ENCODE measurements at regions of chr6 and their contacts with region 1.

Region 1: DNA sequence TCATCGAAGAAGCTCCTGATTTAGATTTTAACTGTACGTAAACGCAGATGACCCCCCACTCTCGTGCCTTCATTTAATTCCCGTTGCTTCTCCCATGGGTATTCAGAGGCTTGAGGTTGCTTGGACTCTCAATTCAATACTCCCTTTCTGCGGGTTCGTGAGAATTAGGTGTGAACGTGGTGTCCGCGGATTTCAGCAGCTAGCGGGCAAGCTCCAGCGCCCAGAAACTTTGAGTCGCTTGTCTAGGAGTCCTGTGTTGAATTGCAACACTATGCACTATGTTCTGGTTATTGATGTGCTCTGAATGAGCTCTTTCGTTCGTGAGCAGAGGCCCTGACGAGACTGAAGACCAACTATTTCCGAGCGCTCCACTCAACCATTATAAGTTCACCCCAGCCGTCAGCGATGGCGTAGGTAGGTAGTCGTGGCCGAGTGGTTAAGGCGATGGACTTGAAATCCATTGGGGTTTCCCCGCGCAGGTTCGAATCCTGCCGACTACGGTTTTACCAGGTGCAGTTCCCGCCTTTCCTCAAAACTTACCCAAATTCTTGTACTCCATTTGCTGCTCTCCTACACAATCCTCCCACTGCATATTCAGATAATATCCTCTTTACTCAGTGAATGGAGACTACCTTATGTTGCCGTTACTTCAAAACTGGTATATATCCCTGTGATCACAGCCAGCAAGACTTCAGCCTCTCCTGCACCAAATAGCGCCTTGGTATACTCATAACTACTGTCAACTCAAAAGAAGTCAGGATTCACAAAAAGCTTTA is 72.6 kb upstream of the ZNF184 start:
- DNase-seq: peak; percentile 87
- H3K4me3 Mint-ChIP-seq: peak overlapping the region; percentile 83
- H3K27ac Mint-ChIP-seq: peak overlapping the region; percentile 91
- H3K4me1 Mint-ChIP-seq: peaks cover 22% of the 10 kb centered on the region
- H3K27me3 Mint-ChIP-seq: no peaks in the 10 kb centered on the region
- CTCF ChIP-seq: no peak

Region 2: GRCh38 chr6:27177485-27178406 is 367.7 kb before region 1 on chr6:
- CTCF ChIA-PET with region 1: no interaction called
- POLR2A ChIA-PET with region 1: interaction called, 6 read pairs
- intact Hi-C with region 1: loop called (anchors 5 kb)
- DNase-seq: peak; percentile 92
- H3K4me3 Mint-ChIP-seq: peak overlapping the region; percentile 87
- H3K27ac Mint-ChIP-seq: peak overlapping the region; percentile 92
- H3K4me1 Mint-ChIP-seq: no peaks in the 10 kb centered on the region
- H3K27me3 Mint-ChIP-seq: no peaks in the 10 kb centered on the region
- CTCF ChIP-seq: peak; percentile 36

Region 3: DNA sequence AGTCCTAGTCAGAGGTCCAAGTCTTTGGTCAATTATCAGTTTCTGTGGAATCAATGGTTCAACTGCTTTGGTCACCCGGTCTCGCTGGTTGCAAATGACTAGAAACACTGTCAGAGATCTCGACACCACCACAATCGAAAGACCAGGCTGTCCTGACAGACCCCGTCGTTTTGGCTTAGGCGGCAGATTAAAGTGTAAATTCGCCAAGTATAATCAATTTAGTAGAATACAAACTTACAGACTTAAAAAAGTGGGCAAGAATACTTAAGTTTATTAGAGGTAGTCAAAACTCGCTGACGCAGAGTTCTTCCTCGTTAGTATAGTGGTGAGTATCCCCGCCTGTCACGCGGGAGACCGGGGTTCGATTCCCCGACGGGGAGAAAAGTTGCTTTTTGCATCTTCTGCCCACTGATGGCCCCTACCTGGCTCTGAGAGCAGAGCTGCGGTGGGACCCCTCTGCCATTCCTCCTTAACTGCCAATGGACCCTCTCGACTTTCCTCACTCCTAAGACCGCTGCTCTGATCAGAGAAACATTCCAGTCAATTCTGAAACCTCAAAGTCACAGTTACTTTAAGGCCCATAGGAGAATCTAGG is 41.9 kb before region 1 on chr6:
- CTCF ChIA-PET with region 1: interaction called, 5 read pairs
- POLR2A ChIA-PET with region 1: interaction called, 5 read pairs
- intact Hi-C with region 1: loop called (anchors 5 kb)
- DNase-seq: peak; percentile 74
- H3K4me3 Mint-ChIP-seq: peak overlapping the region; percentile 83
- H3K27ac Mint-ChIP-seq: peak overlapping the region; percentile 84
- H3K4me1 Mint-ChIP-seq: peaks cover 11% of the 10 kb centered on the region
- H3K27me3 Mint-ChIP-seq: no peaks in the 10 kb centered on the region
- CTCF ChIP-seq: no peak

Region 4: DNA sequence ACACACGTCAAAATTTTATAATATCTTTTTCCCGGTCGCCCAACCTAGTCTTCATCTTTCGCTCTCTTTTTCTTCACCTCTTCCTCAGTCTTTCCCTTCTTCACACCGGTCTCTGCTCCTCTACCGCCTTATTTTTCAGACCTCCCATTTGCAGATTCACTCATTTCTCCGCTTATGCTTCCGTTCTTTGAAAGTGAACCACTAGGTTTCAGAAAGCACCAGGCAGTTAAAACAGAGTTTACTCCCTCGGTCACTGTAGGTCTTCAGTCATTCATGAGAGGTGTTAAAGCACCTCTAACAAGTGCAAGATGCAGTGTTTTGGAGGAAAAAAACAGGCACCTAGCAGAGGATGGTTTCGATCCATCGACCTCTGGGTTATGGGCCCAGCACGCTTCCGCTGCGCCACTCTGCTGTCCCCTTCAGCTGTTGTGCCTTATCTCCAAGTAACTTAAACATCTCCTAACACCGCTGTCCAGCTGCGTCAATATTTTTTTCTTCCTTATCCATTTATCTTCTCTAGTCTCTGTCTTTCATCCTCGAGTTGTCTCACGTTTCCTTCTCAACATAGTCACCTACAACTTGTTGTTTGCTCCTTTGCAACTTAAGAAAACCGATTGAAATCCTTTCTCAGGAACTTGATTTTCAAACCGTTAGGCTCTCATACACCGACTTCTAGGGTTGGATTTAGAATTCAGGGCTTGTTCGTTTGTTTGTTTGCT is 47.2 kb after region 1 on chr6:
- CTCF ChIA-PET with region 1: interaction called, 3 read pairs
- POLR2A ChIA-PET with region 1: interaction called, 4 read pairs
- intact Hi-C with region 1: loop called (anchors 1 kb)
- DNase-seq: peak; percentile 82
- H3K4me3 Mint-ChIP-seq: no peak overlapping the region
- H3K27ac Mint-ChIP-seq: no peak overlapping the region
- H3K4me1 Mint-ChIP-seq: no peaks in the 10 kb centered on the region
- H3K27me3 Mint-ChIP-seq: no peaks in the 10 kb centered on the region
- CTCF ChIP-seq: no peak

Region 5: DNA sequence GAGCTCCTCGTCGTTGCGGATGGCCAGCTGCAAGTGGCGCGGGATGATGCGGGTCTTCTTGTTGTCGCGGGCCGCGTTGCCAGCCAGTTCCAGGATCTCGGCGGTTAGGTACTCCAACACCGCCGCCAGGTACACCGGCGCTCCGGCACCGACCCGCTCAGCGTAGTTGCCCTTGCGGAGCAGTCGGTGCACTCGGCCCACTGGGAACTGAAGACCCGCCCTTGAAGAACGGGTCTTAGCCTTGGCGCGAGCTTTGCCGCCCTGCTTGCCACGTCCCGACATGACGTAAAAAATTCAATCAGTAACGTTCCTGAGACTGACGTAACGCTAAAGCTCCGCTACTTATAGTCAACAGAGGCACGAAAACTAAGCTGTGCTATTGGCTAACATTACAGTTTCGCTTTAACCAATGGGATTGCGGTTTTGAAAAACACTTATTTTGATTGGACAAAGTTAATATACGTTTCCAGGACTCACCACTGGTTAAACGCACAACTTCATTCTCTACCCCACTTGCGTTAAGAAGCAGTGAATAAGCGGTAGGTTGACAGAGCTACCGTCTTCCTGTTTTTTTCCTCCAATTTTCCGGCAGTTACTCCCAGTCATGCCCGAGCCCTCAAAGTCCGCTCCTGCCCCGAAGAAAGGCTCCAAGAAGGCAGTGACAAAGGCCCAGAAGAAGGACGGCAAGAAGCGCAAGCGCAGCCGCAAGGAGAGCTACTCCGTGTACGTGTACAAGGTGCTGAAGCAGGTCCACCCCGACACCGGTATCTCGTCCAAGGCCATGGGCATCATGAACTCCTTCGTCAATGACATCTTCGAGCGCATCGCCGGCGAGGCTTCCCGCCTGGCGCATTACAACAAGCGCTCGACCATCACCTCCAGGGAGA is 292.8 kb after region 1 on chr6:
- CTCF ChIA-PET with region 1: no interaction called
- POLR2A ChIA-PET with region 1: interaction called, 12 read pairs
- intact Hi-C with region 1: no loop called
- DNase-seq: peak; percentile 98
- H3K4me3 Mint-ChIP-seq: no peak overlapping the region
- H3K27ac Mint-ChIP-seq: no peak overlapping the region
- H3K4me1 Mint-ChIP-seq: peaks cover 32% of the 10 kb centered on the region
- H3K27me3 Mint-ChIP-seq: no peaks in the 10 kb centered on the region
- CTCF ChIP-seq: no peak

Region 6: DNA sequence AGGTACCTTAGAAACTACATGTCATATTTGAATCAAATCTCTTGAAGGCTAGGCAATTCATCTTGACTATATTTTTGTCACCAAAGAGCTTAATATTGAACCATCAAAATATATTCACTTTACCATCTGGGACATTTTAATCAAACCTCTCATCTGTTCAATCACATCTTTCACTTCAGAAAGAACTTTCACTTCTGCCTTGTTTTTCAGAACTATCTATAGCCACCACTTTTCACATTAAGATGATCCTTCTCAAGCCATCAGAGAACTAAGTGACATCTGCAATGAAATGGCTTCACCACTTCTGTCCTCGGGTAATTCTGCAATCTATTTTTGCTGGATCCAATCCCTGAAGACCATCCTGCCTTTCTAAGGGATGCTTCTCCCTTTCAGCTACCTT is 309.0 kb after region 1 on chr6:
- CTCF ChIA-PET with region 1: no interaction called
- POLR2A ChIA-PET with region 1: no interaction called
- intact Hi-C with region 1: no loop called
- DNase-seq: no peak
- H3K4me3 Mint-ChIP-seq: no peak overlapping the region
- H3K27ac Mint-ChIP-seq: no peak overlapping the region
- H3K4me1 Mint-ChIP-seq: no peaks in the 10 kb centered on the region
- H3K27me3 Mint-ChIP-seq: no peaks in the 10 kb centered on the region
- CTCF ChIP-seq: no peak